ENCODE measurements at regions of chr5 and their contacts with region 1.

Region 1: GRCh38 chr5:56195016-56195415 is 38.1 kb downstream of the ANKRD55 start:
- DNase-seq: no peak
- ATAC-seq: no peak
- H3K4me3 ChIP-seq: no peak overlapping the region
- H3K27ac ChIP-seq: no peak overlapping the region
- H3K4me1 ChIP-seq: no peaks in the 10 kb centered on the region
- H3K27me3 ChIP-seq: no peaks in the 10 kb centered on the region
- CTCF ChIP-seq: no peak
- POLR2A ChIP-seq: no peak

Region 2: GRCh38 chr5:55988979-55989638 is 205.9 kb before region 1 on chr5:
- in situ Hi-C with region 1: loop called in 2 of 4 experiments (anchors 5 to 25 kb)
- intact Hi-C with region 1: no loop called
- DNase-seq: no peak
- ATAC-seq: no peak
- H3K4me3 ChIP-seq: peak overlapping the region in 1 of 4 donors; percentile 3
- H3K27ac ChIP-seq: peak overlapping the region in 2 of 4 donors; percentile 16 to 31
- H3K4me1 ChIP-seq: peaks cover 45 to 53% of the 10 kb centered on the region in 2 donors
- H3K27me3 ChIP-seq: no peaks in the 10 kb centered on the region
- CTCF ChIP-seq: no peak
- POLR2A ChIP-seq: no peak

Region 3: DNA sequence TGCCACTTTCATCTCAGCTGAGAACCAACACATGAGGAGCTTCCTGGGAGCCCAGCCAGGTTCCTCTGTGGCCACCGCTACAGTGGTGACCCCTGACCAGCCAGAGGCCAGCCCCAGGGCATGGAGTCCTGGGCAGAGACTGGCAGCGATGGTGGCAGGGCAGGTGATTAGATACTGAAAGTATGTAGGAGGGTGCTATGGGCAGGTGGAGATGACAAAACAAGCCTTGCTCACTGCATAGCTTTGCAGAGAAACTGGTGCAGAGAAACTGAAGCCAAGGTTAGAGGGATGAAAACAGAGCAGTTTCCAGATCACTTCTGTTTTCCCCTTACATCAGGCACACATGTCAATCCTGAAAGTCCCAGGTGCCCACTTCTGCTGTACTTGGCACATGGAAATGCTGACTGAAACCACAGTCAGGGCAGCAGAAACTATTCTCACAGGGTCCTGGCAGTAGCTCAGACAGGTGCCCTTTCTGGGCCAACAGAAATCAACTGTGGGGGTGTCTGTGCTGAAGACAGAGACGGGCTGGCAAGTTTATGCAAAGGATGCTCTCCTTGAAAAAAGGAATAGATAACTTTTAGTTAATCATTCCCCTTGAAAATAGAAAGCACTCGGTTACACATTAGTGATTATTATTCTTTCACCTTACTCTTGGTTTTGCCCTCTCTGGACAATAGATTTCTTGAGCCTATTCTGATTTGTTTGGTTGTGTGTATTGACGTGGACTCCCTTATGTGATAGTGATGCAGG is 52.2 kb before region 1 on chr5:
- in situ Hi-C with region 1: no loop called
- intact Hi-C with region 1: no loop called
- DNase-seq: no peak
- ATAC-seq: no peak
- H3K4me3 ChIP-seq: no peak overlapping the region
- H3K27ac ChIP-seq: no peak overlapping the region
- H3K4me1 ChIP-seq: no peaks in the 10 kb centered on the region
- H3K27me3 ChIP-seq: no peaks in the 10 kb centered on the region
- CTCF ChIP-seq: no peak
- POLR2A ChIP-seq: no peak

Measured in gastrocnemius medialis (tissue), 4 donors.